CD14-positive monocyte (primary cell): ENCODE measurements at regions of chr12 and their contacts with region 1.

Region 1: GRCh38 chr12:102061560-102062418 is at the start of gene WASHC3:
- DNase-seq: peak; percentile 87 to 93 (median 89)
- H3K4me3 ChIP-seq: peak within 1 kb of the TSS; percentile 81 to 90 (median 84)
- H3K4me3 Mint-ChIP-seq: peak within 1 kb of the TSS; percentile 98
- H3K27ac ChIP-seq: peak within 1 kb of the TSS; percentile 34 to 92
- H3K27ac Mint-ChIP-seq: peak within 1 kb of the TSS; percentile 89 to 99 (median 97)
- H3K4me1 ChIP-seq: peaks cover 6 to 13% of the 10 kb centered on the region in 2 donors
- H3K4me1 Mint-ChIP-seq: peaks cover 12% of the 10 kb centered on the region
- H3K27me3 ChIP-seq: no peaks in the 10 kb centered on the region
- H3K27me3 Mint-ChIP-seq: peaks cover 0 to 5% (median 0%) of the 10 kb centered on the region in 3 donors
- CTCF ChIP-seq: no peak
- polyA plus RNA-seq, gene WASHC3: 26.0 to 75.8 (median 66.2) TPM

Region 2: DNA sequence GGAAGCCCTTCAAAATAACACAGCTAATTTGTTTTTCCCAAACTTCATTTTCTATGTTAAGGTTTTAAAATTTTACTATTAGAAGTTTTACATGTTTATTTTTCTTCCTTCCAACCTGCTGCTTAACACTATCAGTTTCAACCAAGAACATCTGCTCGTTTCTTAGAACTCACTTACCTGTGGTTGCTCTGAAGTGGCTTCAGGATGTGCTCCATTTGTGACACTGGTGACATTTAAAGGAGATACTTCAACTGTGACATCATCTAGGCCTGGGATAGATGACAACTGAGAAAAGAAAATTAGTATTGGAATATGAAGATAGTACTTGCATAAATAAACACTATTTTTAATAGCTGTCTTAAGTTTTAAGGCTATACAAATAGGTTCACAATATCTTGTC is 17.9 kb before region 1 on chr12:
- intact Hi-C with region 1: no loop called
- DNase-seq: no peak
- H3K4me3 ChIP-seq: no peak overlapping the region
- H3K4me3 Mint-ChIP-seq: no peak overlapping the region
- H3K27ac ChIP-seq: no peak overlapping the region
- H3K27ac Mint-ChIP-seq: no peak overlapping the region
- H3K4me1 ChIP-seq: no peaks in the 10 kb centered on the region
- H3K4me1 Mint-ChIP-seq: no peaks in the 10 kb centered on the region
- H3K27me3 ChIP-seq: no peaks in the 10 kb centered on the region
- H3K27me3 Mint-ChIP-seq: no peaks in the 10 kb centered on the region
- CTCF ChIP-seq: no peak

Region 3: DNA sequence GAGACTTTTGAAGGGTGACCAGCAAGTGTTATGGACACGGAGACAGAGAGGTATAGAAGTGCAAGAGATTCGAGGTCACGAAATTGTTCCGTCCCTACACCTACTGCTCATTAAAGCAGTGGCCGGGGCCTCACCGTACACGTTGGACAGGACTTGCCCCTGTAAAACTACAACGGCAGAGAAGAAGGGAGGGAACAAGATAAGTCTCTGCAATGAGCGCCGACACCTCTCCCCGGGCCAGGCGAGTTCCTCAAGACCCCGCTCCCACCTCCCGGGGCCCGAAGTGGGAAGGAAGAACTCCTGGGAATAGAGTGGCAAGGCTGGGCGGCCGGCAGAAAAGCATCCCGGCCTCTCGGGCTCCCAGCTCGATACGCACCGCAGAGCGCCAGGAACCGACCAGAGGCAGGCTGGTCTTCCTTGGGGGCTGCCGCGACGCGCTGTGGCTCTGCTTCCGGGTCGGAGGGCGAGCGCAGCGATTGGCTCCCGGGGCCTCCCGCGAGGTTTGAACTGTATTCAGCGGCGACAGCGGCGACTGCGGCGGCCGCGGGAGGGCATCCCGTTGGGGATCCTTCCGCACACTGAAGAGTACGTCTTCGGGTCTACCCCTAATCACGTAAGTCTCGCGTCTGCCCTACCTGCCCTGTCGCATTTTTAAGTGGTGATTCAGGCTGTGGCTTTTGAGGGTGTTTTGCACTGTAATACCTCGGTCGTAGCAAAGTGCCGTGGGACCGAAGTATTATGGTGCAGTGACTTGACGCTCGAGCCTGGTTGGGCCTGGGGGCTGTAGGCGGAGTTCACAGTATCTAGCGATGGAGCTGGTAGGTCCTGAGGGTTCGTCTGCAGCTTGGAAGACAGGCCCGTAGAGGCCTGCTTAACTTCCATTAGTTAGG is 58.1 kb after region 1 on chr12 and contains the starts of genes NUP37 and PARPBP:
- intact Hi-C with region 1: loop called (anchors 5 kb)
- DNase-seq: peak; percentile 81 to 83 (median 82)
- H3K4me3 ChIP-seq: peak within 1 kb of the TSS; percentile 81 to 91 (median 84)
- H3K4me3 Mint-ChIP-seq: peak within 1 kb of the TSS; percentile 91
- H3K27ac ChIP-seq: peak within 1 kb of the TSS; percentile 72 to 89
- H3K27ac Mint-ChIP-seq: peak within 1 kb of the TSS; percentile 85 to 96 (median 94)
- H3K4me1 ChIP-seq: peaks cover 21 to 26% of the 10 kb centered on the region in 2 donors
- H3K4me1 Mint-ChIP-seq: peaks cover 19% of the 10 kb centered on the region
- H3K27me3 ChIP-seq: no peaks in the 10 kb centered on the region
- H3K27me3 Mint-ChIP-seq: no peaks in the 10 kb centered on the region
- CTCF ChIP-seq: no peak
- polyA plus RNA-seq, gene NUP37: 11.1 to 23.0 (median 20.9) TPM
- polyA plus RNA-seq, gene PARPBP: 0.68 to 1.8 (median 1.6) TPM